ENCODE measurements at regions of chr2 and their contacts with region 1.

Region 1: DNA sequence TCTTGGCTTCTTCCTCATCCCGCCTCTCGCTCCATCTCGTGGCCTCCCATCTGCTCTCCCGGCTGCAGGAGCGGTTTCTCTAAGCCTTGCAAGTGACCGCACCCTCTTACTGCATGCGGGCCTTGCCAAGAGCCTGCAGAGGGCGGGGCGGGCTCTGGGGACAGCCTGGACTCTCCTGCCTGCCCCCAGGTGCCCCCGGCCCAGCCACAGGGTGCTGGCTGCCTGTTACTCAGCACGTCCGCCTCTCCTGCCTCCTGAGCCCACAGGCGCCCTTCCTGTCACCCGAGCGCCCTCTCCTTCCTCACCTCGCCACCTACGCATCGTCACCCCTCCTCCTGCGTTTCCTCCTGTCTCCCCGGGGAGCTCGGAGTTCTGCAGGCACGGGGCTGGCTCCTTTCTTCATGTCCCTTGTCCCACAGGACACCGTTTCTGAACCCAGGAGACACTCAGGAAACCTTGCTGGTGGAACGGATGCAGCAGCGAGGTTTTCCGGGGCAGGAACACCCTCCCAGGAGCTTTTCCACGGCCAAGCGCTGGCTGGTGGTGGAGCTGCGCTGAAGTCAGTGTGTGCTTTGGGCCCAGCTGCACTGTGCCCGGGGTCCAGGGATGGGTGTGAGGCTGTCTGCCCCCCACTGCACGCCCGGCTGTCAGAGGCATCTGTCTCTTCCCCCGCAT is 28.5 kb downstream of the HPCAL1 start:
- DNase-seq: peak; percentile 45 to 79 (median 66)
- ATAC-seq: peak; percentile 63 to 75 (median 72)
- H3K4me3 ChIP-seq: peak overlapping the region; percentile 42 to 72
- H3K4me3 Mint-ChIP-seq: peak overlapping the region; percentile 89 to 91 (median 89)
- H3K27ac ChIP-seq: peak overlapping the region; percentile 92
- H3K27ac Mint-ChIP-seq: peak overlapping the region; percentile 99
- H3K4me1 ChIP-seq: peaks cover 54 to 73% of the 10 kb centered on the region in 2 experiments
- H3K4me1 Mint-ChIP-seq: peaks cover 85 to 90% (median 85%) of the 10 kb centered on the region in 3 donors
- H3K27me3 ChIP-seq: no peaks in the 10 kb centered on the region
- H3K27me3 Mint-ChIP-seq: no peaks in the 10 kb centered on the region

Region 2: GRCh38 chr2:10254373-10255151 is 76.6 kb before region 1 on chr2:
- CTCF ChIA-PET with region 1: no interaction called
- POLR2A ChIA-PET with region 1: no interaction called
- DNase-seq: no peak
- ATAC-seq: no peak
- H3K4me3 ChIP-seq: no peak overlapping the region
- H3K4me3 Mint-ChIP-seq: no peak overlapping the region
- H3K27ac ChIP-seq: no peak overlapping the region
- H3K27ac Mint-ChIP-seq: no peak overlapping the region
- H3K4me1 ChIP-seq: peaks cover 0 to 9% of the 10 kb centered on the region in 2 experiments
- H3K4me1 Mint-ChIP-seq: no peaks in the 10 kb centered on the region
- H3K27me3 ChIP-seq: peaks cover 0 to 36% of the 10 kb centered on the region in 2 experiments
- H3K27me3 Mint-ChIP-seq: peaks cover 0 to 4% of the 10 kb centered on the region in 2 donors

Region 3: GRCh38 chr2:10278029-10278762 is 53.0 kb before region 1 on chr2:
- CTCF ChIA-PET with region 1: no interaction called
- POLR2A ChIA-PET with region 1: no interaction called
- DNase-seq: peak in 3 of 35 experiments; percentile 6 to 27 (median 16)
- ATAC-seq: peak in 2 of 4 experiments; percentile 19 to 53
- H3K4me3 ChIP-seq: no peak overlapping the region
- H3K4me3 Mint-ChIP-seq: peak overlapping the region in 1 of 3 donors; percentile 21
- H3K27ac ChIP-seq: no peak overlapping the region
- H3K27ac Mint-ChIP-seq: peak overlapping the region; percentile 63 to 66
- H3K4me1 ChIP-seq: peaks cover 0 to 14% of the 10 kb centered on the region in 2 experiments
- H3K4me1 Mint-ChIP-seq: peaks cover 13 to 19% (median 18%) of the 10 kb centered on the region in 3 donors
- H3K27me3 ChIP-seq: peaks cover 0 to 15% of the 10 kb centered on the region in 2 experiments
- H3K27me3 Mint-ChIP-seq: no peaks in the 10 kb centered on the region

Region 4: GRCh38 chr2:10302479-10303180 is 28.5 kb before region 1 on chr2 and contains the start of gene HPCAL1:
- CTCF ChIA-PET with region 1: interaction called, 8 to 26 read pairs
- POLR2A ChIA-PET with region 1: interaction called in 1 of 2 experiments, 3 read pairs
- DNase-seq: peak; percentile 54 to 89 (median 73)
- ATAC-seq: peak; percentile 73 to 78 (median 74)
- H3K4me3 ChIP-seq: peak within 1 kb of the TSS; percentile 88 to 93
- H3K4me3 Mint-ChIP-seq: peak within 1 kb of the TSS; percentile 93 to 99 (median 96)
- H3K27ac ChIP-seq: peak within 1 kb of the TSS; percentile 77
- H3K27ac Mint-ChIP-seq: peak within 1 kb of the TSS; percentile 89 to 92
- H3K4me1 ChIP-seq: peaks cover 47 to 64% of the 10 kb centered on the region in 2 experiments
- H3K4me1 Mint-ChIP-seq: peaks cover 67 to 74% (median 68%) of the 10 kb centered on the region in 3 donors
- H3K27me3 ChIP-seq: no peaks in the 10 kb centered on the region
- H3K27me3 Mint-ChIP-seq: no peaks in the 10 kb centered on the region
- total RNA-seq, gene HPCAL1: 39.5 to 87.3 (median 83.2) TPM

Region 5: GRCh38 chr2:10382354-10383061 is 51.3 kb after region 1 on chr2:
- CTCF ChIA-PET with region 1: interaction called in 1 of 2 experiments, 13 read pairs
- POLR2A ChIA-PET with region 1: interaction called, 3 to 11 read pairs
- DNase-seq: peak; percentile 9 to 82 (median 56)
- ATAC-seq: peak; percentile 80 to 94 (median 81)
- H3K4me3 ChIP-seq: peak overlapping the region; percentile 35 to 58
- H3K4me3 Mint-ChIP-seq: peak overlapping the region; percentile 46 to 78 (median 65)
- H3K27ac ChIP-seq: peak overlapping the region; percentile 69
- H3K27ac Mint-ChIP-seq: peak overlapping the region; percentile 89 to 93
- H3K4me1 ChIP-seq: peaks cover 51 to 98% of the 10 kb centered on the region in 2 experiments
- H3K4me1 Mint-ChIP-seq: peaks cover 88 to 94% (median 92%) of the 10 kb centered on the region in 3 donors
- H3K27me3 ChIP-seq: no peaks in the 10 kb centered on the region
- H3K27me3 Mint-ChIP-seq: no peaks in the 10 kb centered on the region

Region 6: GRCh38 chr2:10392951-10393644 is 61.9 kb after region 1 on chr2:
- CTCF ChIA-PET with region 1: no interaction called
- POLR2A ChIA-PET with region 1: no interaction called
- DNase-seq: no peak
- ATAC-seq: no peak
- H3K4me3 ChIP-seq: no peak overlapping the region
- H3K4me3 Mint-ChIP-seq: no peak overlapping the region
- H3K27ac ChIP-seq: no peak overlapping the region
- H3K27ac Mint-ChIP-seq: peak overlapping the region; percentile 46 to 54
- H3K4me1 ChIP-seq: peaks cover 0 to 42% of the 10 kb centered on the region in 2 experiments
- H3K4me1 Mint-ChIP-seq: peaks cover 64 to 66% (median 64%) of the 10 kb centered on the region in 3 donors
- H3K27me3 ChIP-seq: no peaks in the 10 kb centered on the region
- H3K27me3 Mint-ChIP-seq: no peaks in the 10 kb centered on the region

Region 7: DNA sequence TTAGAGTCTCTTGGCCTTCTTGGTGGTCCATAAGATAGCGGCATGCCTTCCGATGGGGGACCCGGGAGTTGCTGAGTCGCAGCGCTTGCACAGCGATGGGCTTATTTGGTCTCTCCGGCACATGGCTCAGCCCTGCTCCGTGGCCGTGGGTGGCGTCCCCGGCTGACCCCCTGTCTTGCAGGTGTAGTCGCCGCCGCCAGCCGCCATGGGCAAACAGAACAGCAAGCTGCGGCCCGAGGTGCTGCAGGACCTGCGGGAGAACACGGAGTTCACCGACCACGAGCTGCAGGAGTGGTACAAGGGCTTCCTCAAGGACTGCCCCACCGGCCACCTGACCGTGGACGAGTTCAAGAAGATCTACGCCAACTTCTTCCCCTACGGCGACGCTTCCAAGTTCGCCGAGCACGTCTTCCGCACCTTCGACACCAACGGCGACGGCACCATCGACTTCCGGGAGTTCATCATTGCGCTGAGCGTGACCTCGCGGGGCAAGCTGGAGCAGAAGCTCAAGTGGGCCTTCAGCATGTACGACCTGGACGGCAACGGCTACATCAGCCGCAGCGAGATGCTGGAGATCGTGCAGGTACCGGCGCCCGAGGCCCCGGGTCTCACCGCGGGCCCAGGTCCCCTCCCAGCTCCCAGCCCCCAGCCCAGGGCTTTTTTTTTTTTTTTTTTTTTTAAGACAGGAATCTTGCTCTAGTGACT is 88.5 kb after region 1 on chr2:
- CTCF ChIA-PET with region 1: no interaction called
- POLR2A ChIA-PET with region 1: interaction called in 1 of 2 experiments, 14 read pairs
- DNase-seq: no peak
- ATAC-seq: no peak
- H3K4me3 ChIP-seq: no peak overlapping the region
- H3K4me3 Mint-ChIP-seq: no peak overlapping the region
- H3K27ac ChIP-seq: no peak overlapping the region
- H3K27ac Mint-ChIP-seq: no peak overlapping the region
- H3K4me1 ChIP-seq: no peaks in the 10 kb centered on the region
- H3K4me1 Mint-ChIP-seq: peaks cover 3 to 6% (median 4%) of the 10 kb centered on the region in 3 donors
- H3K27me3 ChIP-seq: no peaks in the 10 kb centered on the region
- H3K27me3 Mint-ChIP-seq: no peaks in the 10 kb centered on the region